ENCODE measurements at regions of chr7 and their contacts with region 1.

Region 1: GRCh38 chr7:159158888-159159405 is 14.3 kb upstream of the VIPR2 start:
- DNase-seq: no peak
- ATAC-seq: peak in 1 of 3 donors; percentile 30
- H3K4me3 ChIP-seq: no peak overlapping the region
- H3K4me3 Mint-ChIP-seq: no peak overlapping the region
- H3K27ac ChIP-seq: no peak overlapping the region
- H3K27ac Mint-ChIP-seq: no peak overlapping the region
- H3K4me1 ChIP-seq: no peaks in the 10 kb centered on the region
- H3K4me1 Mint-ChIP-seq: peaks cover 0 to 4% of the 10 kb centered on the region in 2 donors
- H3K27me3 ChIP-seq: no peaks in the 10 kb centered on the region
- H3K27me3 Mint-ChIP-seq: peaks cover 0 to 6% of the 10 kb centered on the region in 2 donors
- CTCF ChIP-seq: no peak

Region 2: GRCh38 chr7:159068488-159068811 is 90.5 kb before region 1 on chr7:
- intact Hi-C with region 1: no loop called
- DNase-seq: peak in 1 of 2 donors; percentile 15
- ATAC-seq: peak; percentile 38 to 61 (median 58)
- H3K4me3 ChIP-seq: no peak overlapping the region
- H3K4me3 Mint-ChIP-seq: peak overlapping the region; percentile 37
- H3K27ac ChIP-seq: peak overlapping the region; percentile 36
- H3K27ac Mint-ChIP-seq: peak overlapping the region in 1 of 2 donors; percentile 85
- H3K4me1 ChIP-seq: peaks cover 19% of the 10 kb centered on the region
- H3K4me1 Mint-ChIP-seq: peaks cover 19 to 42% of the 10 kb centered on the region in 2 donors
- H3K27me3 ChIP-seq: no peaks in the 10 kb centered on the region
- H3K27me3 Mint-ChIP-seq: no peaks in the 10 kb centered on the region
- CTCF ChIP-seq: no peak

Region 3: GRCh38 chr7:159127691-159128642 is 31.0 kb before region 1 on chr7:
- intact Hi-C with region 1: loop called (anchors 2 kb)
- DNase-seq: no peak
- ATAC-seq: no peak
- H3K4me3 ChIP-seq: no peak overlapping the region
- H3K4me3 Mint-ChIP-seq: no peak overlapping the region
- H3K27ac ChIP-seq: no peak overlapping the region
- H3K27ac Mint-ChIP-seq: no peak overlapping the region
- H3K4me1 ChIP-seq: no peaks in the 10 kb centered on the region
- H3K4me1 Mint-ChIP-seq: no peaks in the 10 kb centered on the region
- H3K27me3 ChIP-seq: no peaks in the 10 kb centered on the region
- H3K27me3 Mint-ChIP-seq: peaks cover 14 to 18% of the 10 kb centered on the region in 2 donors
- CTCF ChIP-seq: no peak

Measured in natural killer cell (primary cell).